Esophagus muscularis mucosa (tissue), 4 donors: ENCODE measurements at regions of chr11 and their contacts with region 1.

Region 1: DNA sequence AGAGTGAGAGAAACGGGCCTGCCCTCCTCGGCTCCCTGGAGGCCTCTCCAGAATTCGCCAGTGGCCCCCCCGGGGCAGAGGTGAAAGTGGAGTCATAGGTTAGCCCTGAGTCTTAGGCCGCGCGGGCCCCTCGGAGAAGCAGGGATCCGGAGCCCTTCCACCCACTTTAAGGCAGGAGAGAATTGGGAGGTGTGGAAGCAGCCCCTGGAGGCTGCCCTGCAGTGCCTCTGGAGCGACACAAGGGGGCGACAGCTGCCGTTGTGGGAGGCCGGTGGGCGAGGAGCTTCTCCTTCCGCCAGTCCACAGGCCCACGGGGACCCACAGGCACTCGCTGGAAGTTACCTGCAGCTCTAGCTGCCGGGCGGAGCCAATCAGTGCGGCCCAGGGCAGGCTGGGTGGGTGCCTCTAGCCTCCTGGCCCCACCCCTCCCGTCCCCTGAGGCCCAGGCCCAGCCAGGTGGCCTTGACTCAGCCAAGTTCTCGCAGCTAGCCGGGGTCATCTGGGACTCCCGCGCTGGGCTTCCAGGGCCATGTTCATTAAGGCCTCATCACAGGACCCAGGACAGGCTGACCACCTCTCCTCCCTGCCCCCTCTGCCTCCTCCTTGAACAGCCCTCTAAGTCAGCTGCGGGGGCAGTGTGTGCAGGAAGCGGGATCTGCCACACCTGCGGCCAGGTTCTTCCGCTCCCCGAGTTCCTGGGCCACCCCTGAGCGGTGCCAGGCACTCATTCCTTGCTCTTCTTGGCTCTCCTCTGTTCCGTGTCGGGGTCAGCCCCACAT is 5.0 kb downstream of the DGKZ start:
- DNase-seq: no peak
- H3K4me3 ChIP-seq: peak overlapping the region in 3 of 4 donors; percentile 5 to 18 (median 16)
- H3K27ac ChIP-seq: peak overlapping the region in 1 of 4 donors; percentile 5
- H3K4me1 ChIP-seq: peaks cover 44 to 80% (median 58%) of the 10 kb centered on the region in 4 donors
- H3K27me3 ChIP-seq: no peaks in the 10 kb centered on the region
- CTCF ChIP-seq: peak; percentile 84 to 90 (median 86)
- EP300 ChIP-seq: no peak
- POLR2A ChIP-seq: no peak

Region 2: GRCh38 chr11:46367244-46367915 is 15.1 kb after region 1 on chr11:
- intact Hi-C with region 1: loop called (anchors 2 kb)
- DNase-seq: no peak
- H3K4me3 ChIP-seq: peak overlapping the region in 3 of 4 donors; percentile 10 to 22 (median 20)
- H3K27ac ChIP-seq: peak overlapping the region in 2 of 4 donors; percentile 8 to 32
- H3K4me1 ChIP-seq: peaks cover 30 to 53% (median 41%) of the 10 kb centered on the region in 4 donors
- H3K27me3 ChIP-seq: no peaks in the 10 kb centered on the region
- CTCF ChIP-seq: peak; percentile 82 to 94 (median 91)
- EP300 ChIP-seq: no peak
- POLR2A ChIP-seq: no peak